ENCODE measurements at regions of chr9 and their contacts with region 1.

Region 1: GRCh38 chr9:119318371-119318770 is 50.9 kb downstream of the BRINP1 start:
- DNase-seq: no peak
- ATAC-seq: no peak
- H3K4me3 ChIP-seq: no peak overlapping the region
- H3K27ac ChIP-seq: no peak overlapping the region
- H3K4me1 ChIP-seq: peaks cover 0 to 10% (median 0%) of the 10 kb centered on the region in 12 donors
- H3K27me3 ChIP-seq: no peaks in the 10 kb centered on the region
- CTCF ChIP-seq: no peak
- POLR2A ChIP-seq: no peak

Region 2: GRCh38 chr9:118686959-118687358 is 631.4 kb before region 1 on chr9:
- intact Hi-C with region 1: no loop called
- DNase-seq: no peak
- ATAC-seq: no peak
- H3K4me3 ChIP-seq: no peak overlapping the region
- H3K27ac ChIP-seq: no peak overlapping the region
- H3K4me1 ChIP-seq: no peaks in the 10 kb centered on the region
- H3K27me3 ChIP-seq: no peaks in the 10 kb centered on the region
- CTCF ChIP-seq: no peak
- POLR2A ChIP-seq: no peak

Region 3: DNA sequence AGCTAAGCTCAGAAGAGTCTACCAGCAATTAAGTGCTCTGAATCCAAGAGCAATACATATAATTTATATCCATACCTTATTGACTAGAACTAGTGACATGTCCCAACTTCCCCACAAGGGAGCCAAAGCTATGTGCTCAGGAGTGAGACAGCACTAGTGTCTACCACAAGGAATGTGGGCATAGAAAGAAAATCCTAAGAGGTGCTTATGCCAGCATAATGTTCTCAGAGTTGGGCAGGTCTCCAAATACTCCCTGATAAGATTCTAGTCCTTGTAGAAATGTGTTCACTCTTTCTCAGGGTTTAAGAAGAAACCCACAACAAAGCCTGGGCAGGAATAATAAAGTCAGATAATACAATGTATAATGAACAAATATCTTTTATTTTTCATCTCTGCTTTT is 224.3 kb before region 1 on chr9:
- intact Hi-C with region 1: no loop called
- DNase-seq: no peak
- ATAC-seq: peak in 1 of 4 donors; percentile 22
- H3K4me3 ChIP-seq: no peak overlapping the region
- H3K27ac ChIP-seq: no peak overlapping the region
- H3K4me1 ChIP-seq: peaks cover 0 to 5% (median 0%) of the 10 kb centered on the region in 12 donors
- H3K27me3 ChIP-seq: no peaks in the 10 kb centered on the region
- CTCF ChIP-seq: no peak
- POLR2A ChIP-seq: no peak

Region 4: DNA sequence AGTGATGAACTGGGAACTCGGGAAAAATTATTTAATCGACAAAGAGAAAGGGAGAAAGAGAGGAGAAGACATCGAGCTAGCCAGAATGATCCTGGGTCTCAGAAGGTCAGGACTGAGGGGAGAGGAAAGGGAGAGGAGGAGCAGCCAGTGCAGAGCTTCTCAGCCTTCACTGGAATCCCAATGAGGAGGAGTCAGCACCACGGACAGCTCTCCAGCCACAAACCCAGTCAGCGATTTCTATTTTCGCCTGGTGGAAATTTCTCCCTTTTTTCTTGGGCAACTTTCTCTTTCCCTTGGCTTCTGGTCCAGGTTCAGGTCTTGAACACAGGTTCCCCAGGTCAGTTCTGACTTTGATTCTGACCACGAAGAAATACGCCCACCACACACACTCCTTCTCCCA is 52.4 kb after region 1 on chr9:
- intact Hi-C with region 1: loop called in 1 of 10 experiments (anchors 10 kb)
- DNase-seq: peak; percentile 18 to 60 (median 30)
- ATAC-seq: no peak
- H3K4me3 ChIP-seq: no peak overlapping the region
- H3K27ac ChIP-seq: no peak overlapping the region
- H3K4me1 ChIP-seq: peaks cover 0 to 13% (median 0%) of the 10 kb centered on the region in 12 donors
- H3K27me3 ChIP-seq: peaks cover 0 to 37% (median 29%) of the 10 kb centered on the region in 9 donors
- CTCF ChIP-seq: no peak
- POLR2A ChIP-seq: no peak